Activated CD4-positive, alpha-beta T cell treated with anti-CD3 and anti-CD28 coated beads for 36 hours (primary cell): ENCODE measurements at regions of chr19 and their contacts with region 1.

Region 1: GRCh38 chr19:34639491-34640085 is 37.4 kb downstream of the SCGB2B2 start:
- DNase-seq: peak; percentile 74
- ATAC-seq: peak; percentile 64
- H3K4me3 Mint-ChIP-seq: no peak overlapping the region
- H3K27ac Mint-ChIP-seq: no peak overlapping the region
- H3K4me1 Mint-ChIP-seq: no peaks in the 10 kb centered on the region
- H3K27me3 Mint-ChIP-seq: no peaks in the 10 kb centered on the region

Region 2: DNA sequence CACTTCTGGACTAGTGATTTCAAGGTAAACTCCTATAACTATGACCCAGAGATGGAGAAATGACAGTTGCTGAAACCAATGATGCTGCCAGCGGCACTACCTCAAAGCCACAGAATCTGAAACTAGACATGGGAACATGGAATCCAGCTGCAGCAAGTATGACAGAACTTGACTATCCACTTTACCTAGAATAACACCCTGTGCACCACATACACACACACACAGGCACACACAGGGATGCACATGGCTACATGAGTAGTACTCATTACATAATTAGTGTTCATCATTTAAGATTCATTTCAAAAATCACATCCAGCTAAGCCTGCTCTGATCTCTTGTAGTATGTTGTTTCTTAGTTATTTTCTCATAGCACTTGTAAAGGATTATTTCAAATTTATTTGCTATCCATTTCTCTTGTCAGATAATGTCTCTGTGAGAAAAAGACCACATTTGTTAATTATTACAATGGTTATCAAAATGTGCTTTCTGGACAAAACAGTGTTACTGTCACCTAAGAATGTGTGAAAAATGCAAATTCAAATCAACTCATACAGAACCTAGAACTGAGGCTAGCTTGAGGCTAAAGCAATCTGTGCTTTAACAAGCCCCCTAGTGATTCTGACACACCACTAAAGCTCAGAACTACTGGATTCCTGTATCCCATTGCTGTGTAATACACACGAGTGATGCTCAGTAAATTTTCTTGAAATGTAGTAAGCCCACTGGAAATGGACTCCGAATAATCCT is 98.6 kb before region 1 on chr19:
- CTCF ChIA-PET with region 1: no interaction called
- POLR2A ChIA-PET with region 1: no interaction called
- intact Hi-C with region 1: no loop called
- DNase-seq: no peak
- ATAC-seq: no peak
- H3K4me3 Mint-ChIP-seq: no peak overlapping the region
- H3K27ac Mint-ChIP-seq: no peak overlapping the region
- H3K4me1 Mint-ChIP-seq: no peaks in the 10 kb centered on the region
- H3K27me3 Mint-ChIP-seq: peaks cover 25% of the 10 kb centered on the region

Region 3: DNA sequence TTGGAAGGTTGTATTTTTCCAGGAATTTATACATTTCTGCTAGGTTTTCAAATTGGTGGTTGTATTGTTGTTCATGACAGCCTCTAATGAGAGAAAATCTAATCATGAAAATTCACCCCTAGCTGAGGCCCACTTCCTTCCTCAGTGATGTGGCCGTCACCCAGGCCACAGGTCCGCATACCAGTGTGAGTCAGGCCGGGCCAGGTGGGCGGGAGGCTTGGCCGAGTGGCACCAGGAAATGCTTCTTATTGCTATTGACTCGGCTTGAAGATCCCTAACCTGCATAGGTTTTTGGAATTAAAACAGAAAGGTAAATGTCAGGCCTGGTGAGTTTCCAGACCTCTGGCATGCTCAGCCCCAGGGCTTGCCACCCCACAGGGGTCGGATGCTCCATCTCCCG is 51.3 kb before region 1 on chr19:
- CTCF ChIA-PET with region 1: no interaction called
- POLR2A ChIA-PET with region 1: no interaction called
- intact Hi-C with region 1: no loop called
- DNase-seq: peak; percentile 14
- ATAC-seq: no peak
- H3K4me3 Mint-ChIP-seq: no peak overlapping the region
- H3K27ac Mint-ChIP-seq: no peak overlapping the region
- H3K4me1 Mint-ChIP-seq: no peaks in the 10 kb centered on the region
- H3K27me3 Mint-ChIP-seq: peaks cover 6% of the 10 kb centered on the region

Region 4: DNA sequence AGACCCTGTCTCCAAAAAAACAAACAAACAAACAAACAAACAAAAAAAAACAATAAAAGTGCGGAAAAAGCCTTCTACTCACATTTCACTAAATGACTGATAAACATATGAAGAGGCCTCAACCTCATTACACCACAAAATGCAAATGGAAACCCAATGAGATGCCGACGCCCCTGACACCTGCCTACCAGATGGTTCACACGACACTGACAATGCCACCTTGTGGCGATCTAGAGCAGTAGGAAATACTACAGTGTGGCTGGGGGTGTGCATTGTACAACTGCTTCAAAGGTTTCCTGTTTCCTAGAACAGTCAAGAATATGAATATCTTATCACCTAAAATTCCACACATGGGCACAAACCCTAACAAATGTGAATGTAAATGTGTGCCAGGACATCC is 23.3 kb after region 1 on chr19:
- CTCF ChIA-PET with region 1: interaction called, 3 read pairs
- POLR2A ChIA-PET with region 1: no interaction called
- intact Hi-C with region 1: loop called in 1 of 2 experiments (anchors 1 kb)
- DNase-seq: peak; percentile 71
- ATAC-seq: peak; percentile 99
- H3K4me3 Mint-ChIP-seq: no peak overlapping the region
- H3K27ac Mint-ChIP-seq: peak overlapping the region; percentile 21
- H3K4me1 Mint-ChIP-seq: peaks cover 22% of the 10 kb centered on the region
- H3K27me3 Mint-ChIP-seq: peaks cover 3% of the 10 kb centered on the region

Region 5: DNA sequence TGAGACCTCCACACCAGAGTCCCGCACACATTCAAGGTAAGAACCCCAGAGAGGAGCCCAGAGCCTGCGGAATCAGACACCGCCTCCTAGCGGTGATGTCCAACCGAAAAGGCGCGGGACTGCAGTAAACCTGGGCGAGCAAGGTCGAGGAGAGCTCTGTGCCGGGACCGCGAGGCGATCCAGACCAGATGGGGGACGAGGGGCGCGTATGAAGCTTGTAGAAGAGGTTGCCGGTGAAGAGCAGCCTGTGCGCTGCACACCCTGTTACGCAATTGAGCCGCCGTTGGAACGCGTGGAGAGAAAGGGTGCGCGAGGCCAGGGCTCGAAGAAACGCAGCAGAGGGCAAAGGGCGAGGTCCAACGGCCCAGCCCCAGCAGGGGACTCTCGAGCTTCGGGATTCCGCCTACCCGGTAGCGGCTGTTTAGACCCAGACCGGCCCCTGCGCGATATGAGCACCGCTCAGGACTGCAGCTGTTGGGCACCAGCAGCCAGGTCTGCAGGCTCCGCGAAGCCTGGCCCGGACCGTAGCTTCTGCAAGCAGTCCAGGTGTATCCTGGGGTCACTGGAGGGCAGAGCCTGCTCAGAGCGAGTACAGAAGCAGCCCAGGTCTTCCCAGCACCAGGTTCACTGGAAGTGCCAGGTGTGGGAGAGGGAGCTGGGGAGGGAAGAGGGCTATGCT is 199.3 kb after region 1 on chr19:
- CTCF ChIA-PET with region 1: interaction called, 10 read pairs
- POLR2A ChIA-PET with region 1: no interaction called
- intact Hi-C with region 1: no loop called
- DNase-seq: peak; percentile 67
- ATAC-seq: peak; percentile 60
- H3K4me3 Mint-ChIP-seq: no peak overlapping the region
- H3K27ac Mint-ChIP-seq: no peak overlapping the region
- H3K4me1 Mint-ChIP-seq: peaks cover 15% of the 10 kb centered on the region
- H3K27me3 Mint-ChIP-seq: no peaks in the 10 kb centered on the region